Activated naive CD4-positive, alpha-beta T cell treated with anti-CD3 and anti-CD28 coated beads for 36 hours (primary cell): ENCODE measurements at regions of chr6 and their contacts with region 1.

Region 1: GRCh38 chr6:148144917-148145521 is 197.6 kb upstream of the SASH1 start:
- DNase-seq: peak; percentile 83
- H3K4me3 Mint-ChIP-seq: no peak overlapping the region
- H3K27ac Mint-ChIP-seq: no peak overlapping the region
- H3K4me1 Mint-ChIP-seq: peaks cover 16% of the 10 kb centered on the region
- H3K27me3 Mint-ChIP-seq: no peaks in the 10 kb centered on the region

Region 2: DNA sequence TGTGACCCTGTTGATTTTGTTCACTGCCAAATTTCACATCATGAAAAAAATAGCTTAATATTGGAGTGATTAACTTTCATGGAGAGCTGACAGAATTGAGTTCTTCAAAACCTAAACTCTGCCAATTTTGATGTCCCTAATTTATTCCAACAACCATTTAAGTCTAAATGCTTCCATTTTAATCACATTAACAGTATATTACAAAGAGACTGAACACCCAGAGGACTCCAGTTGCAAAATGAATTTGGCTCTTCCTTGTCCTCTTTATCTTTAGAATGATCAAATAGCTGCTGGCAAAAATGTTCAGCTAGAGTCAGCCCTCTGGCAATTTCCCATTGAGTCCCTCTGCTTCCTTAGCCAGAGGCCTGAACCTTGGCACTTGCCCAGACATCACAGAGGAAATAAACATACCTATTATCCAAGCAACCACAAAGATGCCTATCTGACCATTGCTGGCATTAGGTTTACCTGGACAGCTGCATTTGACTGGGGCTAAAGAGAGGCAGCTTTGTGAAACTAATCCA is 1239.8 kb before region 1 on chr6:
- CTCF ChIA-PET with region 1: no interaction called
- intact Hi-C with region 1: loop called (anchors 10 kb)
- DNase-seq: no peak
- H3K4me3 Mint-ChIP-seq: no peak overlapping the region
- H3K27ac Mint-ChIP-seq: no peak overlapping the region
- H3K4me1 Mint-ChIP-seq: no peaks in the 10 kb centered on the region
- H3K27me3 Mint-ChIP-seq: peaks cover under 1% of the 10 kb centered on the region

Region 3: DNA sequence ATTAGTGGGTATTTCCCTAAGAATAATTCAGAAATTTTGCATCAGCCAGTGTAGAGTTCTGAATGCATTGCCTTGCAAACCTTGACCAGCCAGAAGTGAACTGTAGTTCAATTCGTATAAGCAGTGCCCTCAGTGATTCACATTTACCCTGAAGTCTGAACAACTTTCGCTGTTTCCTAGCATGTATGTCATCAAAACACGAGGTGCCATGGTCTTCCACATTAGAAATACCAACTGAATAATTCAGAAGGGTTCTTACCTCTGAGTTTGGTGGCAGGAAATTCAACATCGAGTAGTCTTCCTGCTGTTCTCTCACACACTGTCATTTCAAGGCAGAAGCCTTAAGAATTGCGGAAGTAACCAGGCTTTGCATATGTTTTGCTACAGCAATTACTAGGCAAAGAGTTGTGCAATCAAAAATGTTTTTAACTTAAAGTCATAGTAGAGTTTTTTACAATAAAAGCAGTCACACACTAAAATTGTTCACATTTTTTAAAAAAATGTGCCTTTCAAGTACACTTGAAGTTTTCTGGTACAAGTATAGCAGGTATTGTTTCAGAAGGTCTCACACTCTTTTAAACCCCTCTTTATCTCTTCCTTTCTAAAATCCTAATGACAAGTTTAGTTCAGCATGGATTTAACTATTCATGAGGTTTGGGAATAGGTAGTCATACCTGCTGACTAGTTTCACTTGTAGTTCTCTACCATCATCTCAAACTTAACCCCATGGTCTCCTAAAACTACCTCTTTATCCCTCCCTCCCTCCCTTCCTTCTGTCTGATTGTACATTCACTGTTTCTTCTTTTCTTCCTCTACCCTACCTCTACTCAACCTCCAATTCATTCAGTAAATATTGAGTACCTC is 822.5 kb before region 1 on chr6:
- CTCF ChIA-PET with region 1: no interaction called
- intact Hi-C with region 1: loop called (anchors 1 kb)
- DNase-seq: peak; percentile 60
- H3K4me3 Mint-ChIP-seq: peak overlapping the region; percentile 71
- H3K27ac Mint-ChIP-seq: peak overlapping the region; percentile 92
- H3K4me1 Mint-ChIP-seq: peaks cover 19% of the 10 kb centered on the region
- H3K27me3 Mint-ChIP-seq: no peaks in the 10 kb centered on the region

Region 4: DNA sequence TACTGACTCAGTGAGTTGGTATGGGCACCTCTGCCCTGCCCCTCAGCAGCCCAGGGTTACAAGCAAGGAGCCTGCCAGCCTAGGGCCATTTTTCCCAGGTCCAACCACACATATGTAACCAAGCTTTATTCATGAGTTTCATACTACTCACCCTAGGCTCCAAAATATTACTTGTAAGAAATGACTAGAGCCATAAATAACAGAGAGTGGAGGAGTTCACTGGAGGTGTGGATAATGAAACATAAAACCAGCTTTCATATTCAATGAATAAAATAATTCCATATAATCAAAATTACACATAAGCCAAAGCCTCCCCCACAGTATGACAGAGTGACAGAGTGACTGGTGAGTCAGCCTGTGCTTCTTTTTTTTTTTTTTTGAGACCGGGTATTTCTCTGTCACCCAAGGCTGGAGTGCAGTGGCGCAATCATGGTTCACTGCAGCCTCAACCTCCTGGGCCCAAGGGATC is 32.1 kb before region 1 on chr6:
- CTCF ChIA-PET with region 1: no interaction called
- intact Hi-C with region 1: no loop called
- DNase-seq: no peak
- H3K4me3 Mint-ChIP-seq: no peak overlapping the region
- H3K27ac Mint-ChIP-seq: no peak overlapping the region
- H3K4me1 Mint-ChIP-seq: peaks cover 2% of the 10 kb centered on the region
- H3K27me3 Mint-ChIP-seq: peaks cover 10% of the 10 kb centered on the region

Region 5: GRCh38 chr6:148166339-148166968 is 21.4 kb after region 1 on chr6:
- CTCF ChIA-PET with region 1: interaction called, 19 read pairs
- intact Hi-C with region 1: loop called (anchors 1 kb)
- DNase-seq: no peak
- H3K4me3 Mint-ChIP-seq: no peak overlapping the region
- H3K27ac Mint-ChIP-seq: no peak overlapping the region
- H3K4me1 Mint-ChIP-seq: no peaks in the 10 kb centered on the region
- H3K27me3 Mint-ChIP-seq: no peaks in the 10 kb centered on the region

Region 6: GRCh38 chr6:148250975-148251685 is 106.1 kb after region 1 on chr6:
- CTCF ChIA-PET with region 1: no interaction called
- intact Hi-C with region 1: loop called (anchors 1 kb)
- DNase-seq: no peak
- H3K4me3 Mint-ChIP-seq: no peak overlapping the region
- H3K27ac Mint-ChIP-seq: no peak overlapping the region
- H3K4me1 Mint-ChIP-seq: no peaks in the 10 kb centered on the region
- H3K27me3 Mint-ChIP-seq: peaks cover 7% of the 10 kb centered on the region

Region 7: GRCh38 chr6:148593130-148593812 is 448.3 kb after region 1 on chr6:
- CTCF ChIA-PET with region 1: no interaction called
- intact Hi-C with region 1: no loop called
- DNase-seq: no peak
- H3K4me3 Mint-ChIP-seq: no peak overlapping the region
- H3K27ac Mint-ChIP-seq: no peak overlapping the region
- H3K4me1 Mint-ChIP-seq: no peaks in the 10 kb centered on the region
- H3K27me3 Mint-ChIP-seq: peaks cover 17% of the 10 kb centered on the region